ENCODE measurements at regions of chr3 and their contacts with region 1.

Region 1: DNA sequence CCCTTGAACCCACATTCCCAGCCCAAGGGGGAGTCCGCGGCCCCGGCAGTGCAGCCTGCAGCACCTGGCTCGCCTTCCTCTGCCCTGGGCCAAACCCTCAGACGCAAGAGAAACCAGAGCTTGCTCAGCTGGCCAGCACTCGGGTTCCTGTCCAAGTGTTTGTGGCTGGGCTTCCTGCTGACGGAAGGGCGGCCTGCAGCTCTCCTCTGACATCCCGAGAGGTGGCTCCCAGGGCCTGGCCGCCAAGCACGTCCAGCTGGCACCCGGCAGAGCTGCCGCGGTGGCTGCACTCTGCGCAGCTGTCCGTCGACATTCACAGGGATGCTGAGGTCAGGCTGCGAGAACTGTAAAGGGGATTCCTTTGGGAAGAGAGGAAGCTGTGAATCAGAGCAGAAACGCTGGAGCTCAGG is 85.6 kb downstream of the CPN2 start:
- DNase-seq: peak; percentile 83 to 92 (median 87)
- H3K4me3 ChIP-seq: no peak overlapping the region
- H3K27ac ChIP-seq: peak overlapping the region in 1 of 2 donors; percentile 47
- H3K4me1 ChIP-seq: peaks cover 20% of the 10 kb centered on the region
- H3K27me3 ChIP-seq: no peaks in the 10 kb centered on the region
- CTCF ChIP-seq: no peak
- EP300 ChIP-seq: peak; percentile 11
- POLR2A ChIP-seq: no peak

Region 2: GRCh38 chr3:194003125-194004057 is 262.1 kb before region 1 on chr3:
- intact Hi-C with region 1: loop called in 1 of 4 experiments (anchors 10 kb)
- DNase-seq: peak; percentile 90 to 94 (median 92)
- H3K4me3 ChIP-seq: peak overlapping the region; percentile 44
- H3K27ac ChIP-seq: peak overlapping the region; percentile 23 to 69
- H3K4me1 ChIP-seq: peaks cover 11% of the 10 kb centered on the region
- H3K27me3 ChIP-seq: no peaks in the 10 kb centered on the region
- CTCF ChIP-seq: peak in 1 of 3 donors; percentile 0
- EP300 ChIP-seq: no peak
- POLR2A ChIP-seq: peak; percentile 16

Region 3: DNA sequence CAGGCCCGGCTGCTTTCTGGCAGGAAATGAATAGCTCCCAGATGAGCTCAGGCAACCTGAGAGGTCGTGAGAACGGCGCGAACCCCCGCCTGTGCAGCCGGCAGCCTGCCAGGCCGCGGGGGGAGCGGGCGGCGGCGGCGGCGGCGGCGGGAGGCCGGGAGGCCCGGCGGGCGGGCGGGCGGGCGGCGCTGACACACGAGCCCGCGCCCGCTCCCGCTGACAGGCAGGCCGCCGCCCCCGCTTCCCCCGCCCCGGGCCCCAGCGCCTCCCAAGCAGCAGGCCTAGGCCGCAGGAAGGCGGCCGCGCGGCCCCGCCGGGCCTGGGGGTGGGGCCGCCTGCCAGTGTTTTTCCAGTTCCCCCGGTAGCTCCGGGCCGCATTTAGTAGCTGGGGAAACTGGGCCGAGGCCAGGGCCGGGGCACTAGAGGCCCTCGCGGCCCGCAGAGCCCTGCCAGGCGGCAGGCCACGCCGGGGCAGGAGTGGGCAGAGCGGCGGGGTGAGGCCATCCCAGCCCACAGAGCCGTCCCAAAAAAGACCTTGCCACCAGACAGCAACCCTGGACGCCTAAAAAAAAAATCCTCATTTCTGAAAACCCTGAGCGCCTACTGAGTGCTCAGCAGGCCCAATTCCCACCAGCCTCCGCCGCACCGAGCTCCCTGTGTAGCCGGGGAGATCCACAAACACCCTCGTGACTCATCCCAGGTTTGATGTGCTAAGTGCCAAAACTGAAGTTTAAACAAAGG is 123.9 kb before region 1 on chr3:
- intact Hi-C with region 1: loop called (anchors 5 kb)
- DNase-seq: peak; percentile 90 to 93 (median 93)
- H3K4me3 ChIP-seq: peak overlapping the region; percentile 33
- H3K27ac ChIP-seq: peak overlapping the region; percentile 80 to 96
- H3K4me1 ChIP-seq: peaks cover 14% of the 10 kb centered on the region
- H3K27me3 ChIP-seq: no peaks in the 10 kb centered on the region
- CTCF ChIP-seq: no peak
- EP300 ChIP-seq: no peak
- POLR2A ChIP-seq: no peak

Region 4: DNA sequence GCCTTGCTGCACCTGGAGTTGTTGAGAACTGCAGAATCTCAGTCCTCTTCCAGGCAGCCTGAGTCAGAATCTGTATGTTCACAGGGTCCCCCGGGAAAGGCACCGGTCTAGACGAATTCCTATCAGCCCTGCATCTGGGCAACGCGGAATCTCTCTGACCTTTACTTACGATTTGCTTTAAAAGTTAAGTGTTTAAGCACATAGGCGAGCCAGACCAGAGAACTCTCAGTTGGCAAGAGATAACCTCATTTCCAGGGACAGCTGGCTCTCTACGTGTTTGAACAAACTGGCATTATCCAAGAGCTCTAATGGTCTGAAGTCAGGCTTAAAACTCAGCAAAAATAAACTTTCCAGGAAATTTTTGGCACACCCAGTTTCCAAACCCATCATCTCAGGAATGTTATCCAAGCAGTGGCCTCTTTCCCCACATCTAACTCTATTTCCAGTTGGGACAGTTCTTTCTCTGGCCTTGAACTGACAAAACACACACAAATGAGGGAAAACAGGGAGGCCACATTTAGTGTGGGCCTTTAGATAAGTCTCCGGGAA is 76.2 kb before region 1 on chr3:
- intact Hi-C with region 1: loop called in 1 of 4 experiments (anchors 5 kb)
- DNase-seq: peak in 2 of 5 donors; percentile 48 to 53
- H3K4me3 ChIP-seq: no peak overlapping the region
- H3K27ac ChIP-seq: no peak overlapping the region
- H3K4me1 ChIP-seq: peaks cover 10% of the 10 kb centered on the region
- H3K27me3 ChIP-seq: no peaks in the 10 kb centered on the region
- CTCF ChIP-seq: no peak
- EP300 ChIP-seq: no peak
- POLR2A ChIP-seq: no peak

Region 5: GRCh38 chr3:194212845-194213320 is 52.6 kb before region 1 on chr3:
- intact Hi-C with region 1: no loop called
- DNase-seq: no peak
- H3K4me3 ChIP-seq: no peak overlapping the region
- H3K27ac ChIP-seq: no peak overlapping the region
- H3K4me1 ChIP-seq: no peaks in the 10 kb centered on the region
- H3K27me3 ChIP-seq: no peaks in the 10 kb centered on the region
- CTCF ChIP-seq: no peak
- EP300 ChIP-seq: no peak
- POLR2A ChIP-seq: no peak